ENCODE measurements at regions of chr5 and their contacts with region 1.

Region 1: DNA sequence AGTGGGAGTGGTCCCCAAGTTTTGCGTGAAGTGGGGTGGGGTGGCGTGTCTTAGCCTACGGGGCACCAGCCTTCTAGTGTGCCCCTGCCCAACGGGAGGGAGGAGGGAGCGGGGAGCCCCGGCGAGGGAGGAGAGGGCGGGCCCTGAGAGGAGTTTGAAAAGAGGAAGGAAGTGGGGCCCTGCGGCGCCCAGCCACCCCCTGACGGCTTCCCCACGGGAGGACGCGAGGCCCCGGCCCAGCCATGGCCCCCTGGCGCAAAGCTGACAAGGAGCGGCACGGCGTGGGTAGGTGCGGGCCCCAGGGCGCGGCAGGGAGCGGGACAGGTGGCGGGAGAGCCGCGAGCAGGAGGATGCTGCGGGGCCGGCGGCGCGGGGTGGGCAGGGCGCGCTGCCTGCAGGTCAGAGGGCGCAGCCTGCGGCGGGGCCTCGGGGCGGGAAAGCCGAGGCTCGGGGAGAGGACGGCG is at the start of gene DOCK2:
- DNase-seq: peak; percentile 74
- H3K4me3 Mint-ChIP-seq: peak within 1 kb of the TSS; percentile 93
- H3K27ac Mint-ChIP-seq: peak within 1 kb of the TSS; percentile 95
- H3K4me1 Mint-ChIP-seq: peaks cover 47% of the 10 kb centered on the region
- H3K27me3 Mint-ChIP-seq: no peaks in the 10 kb centered on the region
- total RNA-seq, gene DOCK2: 192 to 203 TPM

Region 2: GRCh38 chr5:168600409-168600808 is 1036.7 kb before region 1 on chr5:
- CTCF ChIA-PET with region 1: no interaction called
- intact Hi-C with region 1: no loop called
- DNase-seq: no peak
- H3K4me3 Mint-ChIP-seq: no peak overlapping the region
- H3K27ac Mint-ChIP-seq: no peak overlapping the region
- H3K4me1 Mint-ChIP-seq: no peaks in the 10 kb centered on the region
- H3K27me3 Mint-ChIP-seq: peaks cover 27% of the 10 kb centered on the region

Region 3: GRCh38 chr5:169591636-169592035 is 45.5 kb before region 1 on chr5:
- CTCF ChIA-PET with region 1: no interaction called
- intact Hi-C with region 1: no loop called
- DNase-seq: no peak
- H3K4me3 Mint-ChIP-seq: no peak overlapping the region
- H3K27ac Mint-ChIP-seq: no peak overlapping the region
- H3K4me1 Mint-ChIP-seq: no peaks in the 10 kb centered on the region
- H3K27me3 Mint-ChIP-seq: no peaks in the 10 kb centered on the region

Region 4: GRCh38 chr5:169650701-169651331 is 13.7 kb after region 1 on chr5:
- CTCF ChIA-PET with region 1: interaction called, 5 read pairs
- intact Hi-C with region 1: loop called (anchors 1 kb)
- DNase-seq: peak; percentile 64
- H3K4me3 Mint-ChIP-seq: peak overlapping the region; percentile 49
- H3K27ac Mint-ChIP-seq: peak overlapping the region; percentile 94
- H3K4me1 Mint-ChIP-seq: peaks cover 92% of the 10 kb centered on the region
- H3K27me3 Mint-ChIP-seq: no peaks in the 10 kb centered on the region

Region 5: DNA sequence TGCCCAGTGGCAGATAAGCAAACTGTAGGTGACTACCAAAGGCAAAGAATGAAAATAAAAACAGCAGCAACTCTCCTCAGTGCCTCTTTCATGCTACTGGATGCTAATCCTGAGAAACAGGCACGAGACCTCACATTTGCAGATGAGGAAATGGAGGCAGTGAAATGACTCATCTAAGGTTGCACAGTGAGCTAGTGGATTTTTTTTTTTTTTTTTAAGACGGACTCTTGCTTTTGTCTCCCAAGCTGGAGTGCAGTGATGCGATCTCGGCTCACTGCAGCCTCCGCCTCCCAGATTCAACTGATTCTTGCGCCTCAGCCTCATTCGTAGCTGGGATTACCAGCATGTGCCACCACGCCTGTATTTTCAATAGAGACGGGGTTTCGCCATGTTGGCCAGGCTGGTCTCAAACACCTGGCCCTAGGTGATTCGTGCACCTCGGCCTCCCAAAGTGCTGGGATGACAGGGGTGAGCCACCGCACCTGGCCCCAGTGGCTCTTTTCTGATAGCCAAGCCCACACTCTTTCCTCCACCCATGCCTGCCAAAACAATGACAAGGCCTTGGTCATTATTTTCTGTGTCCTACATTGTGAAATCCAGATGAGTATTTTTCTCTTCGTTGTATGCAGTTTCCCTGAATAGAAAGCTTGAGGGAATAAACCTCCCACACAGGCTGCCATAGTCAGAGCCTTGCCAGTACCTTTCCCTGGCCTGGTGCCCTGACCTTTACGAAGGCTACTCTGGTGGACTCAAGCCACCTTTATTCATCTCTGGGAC is 19.2 kb after region 1 on chr5:
- CTCF ChIA-PET with region 1: no interaction called
- intact Hi-C with region 1: loop called (anchors 1 kb)
- DNase-seq: peak; percentile 61
- H3K4me3 Mint-ChIP-seq: peak overlapping the region; percentile 29
- H3K27ac Mint-ChIP-seq: peak overlapping the region; percentile 77
- H3K4me1 Mint-ChIP-seq: peaks cover 61% of the 10 kb centered on the region
- H3K27me3 Mint-ChIP-seq: no peaks in the 10 kb centered on the region

Region 6: GRCh38 chr5:169670769-169671525 is 33.8 kb after region 1 on chr5:
- CTCF ChIA-PET with region 1: interaction called, 3 read pairs
- intact Hi-C with region 1: loop called (anchors 5 kb)
- DNase-seq: peak; percentile 58
- H3K4me3 Mint-ChIP-seq: no peak overlapping the region
- H3K27ac Mint-ChIP-seq: no peak overlapping the region
- H3K4me1 Mint-ChIP-seq: peaks cover 16% of the 10 kb centered on the region
- H3K27me3 Mint-ChIP-seq: no peaks in the 10 kb centered on the region

Region 7: DNA sequence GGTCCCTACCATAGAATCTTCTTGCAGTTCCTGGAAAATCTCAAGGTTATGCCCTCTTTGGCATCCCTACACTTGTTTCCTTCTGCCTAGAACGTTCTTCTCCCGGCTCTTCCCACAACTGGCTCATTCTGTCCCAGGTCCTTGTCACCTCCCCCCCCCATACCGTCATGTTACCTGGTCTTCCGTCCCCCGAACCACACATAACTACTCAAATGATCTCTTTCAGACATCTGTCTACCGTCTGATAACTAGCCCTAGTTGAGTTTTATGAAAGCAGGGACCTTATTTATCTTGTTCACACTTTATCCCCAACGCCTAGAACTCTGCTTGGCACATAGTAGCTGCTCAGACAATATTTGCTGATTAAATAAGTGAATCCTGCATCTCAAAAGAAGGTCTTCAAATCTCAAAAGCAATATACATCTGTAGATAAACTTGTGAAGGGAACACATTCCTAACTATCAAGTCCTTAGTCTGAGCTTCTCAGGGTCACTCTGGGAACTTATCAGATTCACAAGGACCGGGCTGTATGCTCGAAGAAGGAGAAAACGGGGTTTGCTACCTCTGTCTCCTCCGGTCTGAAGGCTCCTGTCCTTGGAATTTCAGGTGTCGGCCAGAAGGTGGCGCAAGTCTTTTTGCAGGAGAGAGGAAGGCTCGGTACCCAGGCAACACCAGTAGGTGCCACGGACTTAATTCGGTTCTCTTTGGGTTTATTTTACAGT is 630.5 kb after region 1 on chr5:
- CTCF ChIA-PET with region 1: no interaction called
- intact Hi-C with region 1: no loop called
- DNase-seq: peak; percentile 90
- H3K4me3 Mint-ChIP-seq: peak overlapping the region; percentile 57
- H3K27ac Mint-ChIP-seq: peak overlapping the region; percentile 86
- H3K4me1 Mint-ChIP-seq: peaks cover 88% of the 10 kb centered on the region
- H3K27me3 Mint-ChIP-seq: no peaks in the 10 kb centered on the region

Measured in activated naive CD4-positive, alpha-beta T cell treated with anti-CD3 and anti-CD28 coated beads for 36 hours (primary cell).